Activated T-helper 1 cell treated with anti-CD3 and anti-CD28 coated beads, Interleukin-12 subunit alpha, Interleukin-12 subunit beta, Interleukin-2, Interleukin-4 antibody, amounts not matched to agents 30 ng/mL and 10 ng/mL and 1 ng/mL, durations not matched to agents 14 hours and 24 hours and 36 hours (primary cell): ENCODE measurements at regions of chr12 and their contacts with region 1.

Region 1: GRCh38 chr12:93378373-93379325 is 924 bp downstream of the NUDT4 start:
- DNase-seq: peak; percentile 58
- H3K4me3 Mint-ChIP-seq: peak overlapping the region; percentile 100
- H3K27ac Mint-ChIP-seq: peak overlapping the region; percentile 100
- H3K4me1 Mint-ChIP-seq: peaks cover 50% of the 10 kb centered on the region
- H3K27me3 Mint-ChIP-seq: peaks cover 2% of the 10 kb centered on the region

Region 2: GRCh38 chr12:93025145-93025805 is 353.4 kb before region 1 on chr12:
- intact Hi-C with region 1: loop called (anchors 5 kb)
- DNase-seq: no peak
- H3K4me3 Mint-ChIP-seq: no peak overlapping the region
- H3K27ac Mint-ChIP-seq: no peak overlapping the region
- H3K4me1 Mint-ChIP-seq: no peaks in the 10 kb centered on the region
- H3K27me3 Mint-ChIP-seq: peaks cover 2% of the 10 kb centered on the region

Region 3: GRCh38 chr12:93167841-93168492 is 210.7 kb before region 1 on chr12:
- intact Hi-C with region 1: loop called (anchors 2 kb)
- DNase-seq: peak; percentile 6
- H3K4me3 Mint-ChIP-seq: peak overlapping the region; percentile 37
- H3K27ac Mint-ChIP-seq: peak overlapping the region; percentile 18
- H3K4me1 Mint-ChIP-seq: peaks cover 18% of the 10 kb centered on the region
- H3K27me3 Mint-ChIP-seq: peaks cover 2% of the 10 kb centered on the region

Region 4: GRCh38 chr12:93397412-93397811 is 18.8 kb after region 1 on chr12:
- intact Hi-C with region 1: loop called (anchors 1 kb)
- DNase-seq: no peak
- H3K4me3 Mint-ChIP-seq: no peak overlapping the region
- H3K27ac Mint-ChIP-seq: no peak overlapping the region
- H3K4me1 Mint-ChIP-seq: peaks cover 2% of the 10 kb centered on the region
- H3K27me3 Mint-ChIP-seq: no peaks in the 10 kb centered on the region

Region 5: DNA sequence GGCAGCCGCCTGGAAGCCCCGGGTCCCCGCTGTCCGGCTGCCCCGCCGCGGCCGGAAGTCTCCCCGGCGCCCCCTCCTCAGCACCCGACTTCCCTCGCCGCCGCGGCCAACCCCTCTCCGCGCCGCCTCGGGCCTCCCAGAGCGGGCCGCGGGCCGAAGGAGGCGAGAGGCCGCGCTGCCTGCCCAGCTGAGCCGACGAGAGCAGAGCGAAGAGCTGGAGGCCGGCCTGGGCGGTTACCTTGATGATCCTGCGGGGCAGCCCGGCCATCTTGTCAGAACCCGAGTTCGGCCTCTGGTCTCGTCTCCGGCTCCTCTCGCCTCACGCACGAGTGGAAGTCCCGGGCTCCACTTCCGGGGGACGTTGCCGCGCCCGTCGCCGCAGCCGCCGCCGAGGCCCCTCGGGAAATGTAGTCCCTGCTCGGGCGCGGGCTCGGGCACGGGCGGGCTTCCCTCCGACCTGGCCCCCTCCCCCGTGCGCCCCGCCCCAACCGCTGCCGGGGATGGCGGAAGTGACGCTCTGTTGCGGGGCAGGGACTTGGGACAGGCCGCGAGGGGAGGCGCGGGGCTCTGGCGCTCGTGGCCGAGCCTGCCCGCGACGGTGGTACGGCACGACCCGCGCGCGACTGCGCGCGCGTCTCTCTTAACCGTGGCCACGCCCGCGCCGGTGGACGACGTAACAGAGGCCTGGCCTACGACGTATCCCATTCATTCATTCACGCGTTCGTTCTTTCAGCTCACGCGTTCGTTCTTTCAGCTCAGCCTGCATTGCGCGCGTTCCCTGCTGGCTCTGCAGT is 63.2 kb after region 1 on chr12 and contains the start of gene UBE2N:
- intact Hi-C with region 1: loop called (anchors 1 kb)
- DNase-seq: peak; percentile 95
- H3K4me3 Mint-ChIP-seq: peak within 1 kb of the TSS; percentile 96
- H3K27ac Mint-ChIP-seq: peak within 1 kb of the TSS; percentile 99
- H3K4me1 Mint-ChIP-seq: peaks cover 51% of the 10 kb centered on the region
- H3K27me3 Mint-ChIP-seq: no peaks in the 10 kb centered on the region
- total RNA-seq, gene UBE2N: 231 and 239 TPM in 2 replicates

Region 6: GRCh38 chr12:93677195-93678064 is 298.8 kb after region 1 on chr12 and contains the start of gene CRADD:
- intact Hi-C with region 1: loop called (anchors 5 kb)
- DNase-seq: peak; percentile 86
- H3K4me3 Mint-ChIP-seq: peak within 1 kb of the TSS; percentile 85
- H3K27ac Mint-ChIP-seq: peak within 1 kb of the TSS; percentile 96
- H3K4me1 Mint-ChIP-seq: peaks cover 38% of the 10 kb centered on the region
- H3K27me3 Mint-ChIP-seq: no peaks in the 10 kb centered on the region
- total RNA-seq, gene CRADD: 11.2 and 12.3 TPM in 2 replicates